CD4-positive, alpha-beta memory T cell (primary cell): ENCODE measurements at regions of chr15 and their contacts with region 1.

Region 1: DNA sequence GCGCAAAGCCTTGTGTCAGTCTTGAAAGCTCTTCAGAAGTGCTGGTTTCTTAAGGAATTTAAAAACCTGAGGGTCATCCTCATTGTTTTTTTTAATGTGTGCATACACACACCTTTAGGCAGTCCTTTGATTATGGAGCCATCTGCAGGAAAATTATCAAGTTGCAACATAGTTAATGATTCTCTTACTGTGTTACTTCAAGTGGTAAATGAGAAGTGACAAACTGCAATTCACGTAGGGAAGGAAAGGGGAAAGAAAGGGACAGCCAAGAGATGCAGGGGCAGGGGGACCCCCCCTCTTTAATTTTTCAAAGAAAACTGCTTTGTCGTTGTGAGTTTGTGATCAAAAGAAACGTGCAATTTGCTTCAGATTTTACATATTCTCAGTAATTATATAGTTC is 162.4 kb upstream of the CGNL1 start:
- DNase-seq: peak in 3 of 5 donors; percentile 4 to 14 (median 10)
- H3K4me3 ChIP-seq: no peak overlapping the region
- H3K4me3 Mint-ChIP-seq: no peak overlapping the region
- H3K27ac ChIP-seq: no peak overlapping the region
- H3K27ac Mint-ChIP-seq: peak overlapping the region in 1 of 7 donors; percentile 25
- H3K4me1 ChIP-seq: peaks cover 3% of the 10 kb centered on the region
- H3K4me1 Mint-ChIP-seq: peaks cover 3 to 18% (median 10%) of the 10 kb centered on the region in 4 donors
- H3K27me3 ChIP-seq: no peaks in the 10 kb centered on the region
- H3K27me3 Mint-ChIP-seq: no peaks in the 10 kb centered on the region

Region 2: GRCh38 chr15:56491110-56491722 is 722.6 kb before region 1 on chr15:
- CTCF ChIA-PET with region 1: interaction called, 11 read pairs
- POLR2A ChIA-PET with region 1: no interaction called
- intact Hi-C with region 1: no loop called
- DNase-seq: peak in 4 of 5 donors; percentile 19 to 36 (median 27)
- H3K4me3 ChIP-seq: no peak overlapping the region
- H3K4me3 Mint-ChIP-seq: no peak overlapping the region
- H3K27ac ChIP-seq: no peak overlapping the region
- H3K27ac Mint-ChIP-seq: no peak overlapping the region
- H3K4me1 ChIP-seq: no peaks in the 10 kb centered on the region
- H3K4me1 Mint-ChIP-seq: no peaks in the 10 kb centered on the region
- H3K27me3 ChIP-seq: no peaks in the 10 kb centered on the region
- H3K27me3 Mint-ChIP-seq: peaks cover 2 to 4% of the 10 kb centered on the region in 2 donors

Region 3: GRCh38 chr15:56821721-56822425 is 392.0 kb before region 1 on chr15:
- CTCF ChIA-PET with region 1: interaction called, 8 read pairs
- POLR2A ChIA-PET with region 1: no interaction called
- intact Hi-C with region 1: loop called (anchors 5 kb)
- DNase-seq: peak in 4 of 5 donors; percentile 29 to 46 (median 38)
- H3K4me3 ChIP-seq: no peak overlapping the region
- H3K4me3 Mint-ChIP-seq: no peak overlapping the region
- H3K27ac ChIP-seq: no peak overlapping the region
- H3K27ac Mint-ChIP-seq: peak overlapping the region in 1 of 7 donors; percentile 42
- H3K4me1 ChIP-seq: no peaks in the 10 kb centered on the region
- H3K4me1 Mint-ChIP-seq: no peaks in the 10 kb centered on the region
- H3K27me3 ChIP-seq: no peaks in the 10 kb centered on the region
- H3K27me3 Mint-ChIP-seq: no peaks in the 10 kb centered on the region